Naive thymus-derived CD4-positive, alpha-beta T cell (primary cell): ENCODE measurements at regions of chr19 and their contacts with region 1.

Region 1: DNA sequence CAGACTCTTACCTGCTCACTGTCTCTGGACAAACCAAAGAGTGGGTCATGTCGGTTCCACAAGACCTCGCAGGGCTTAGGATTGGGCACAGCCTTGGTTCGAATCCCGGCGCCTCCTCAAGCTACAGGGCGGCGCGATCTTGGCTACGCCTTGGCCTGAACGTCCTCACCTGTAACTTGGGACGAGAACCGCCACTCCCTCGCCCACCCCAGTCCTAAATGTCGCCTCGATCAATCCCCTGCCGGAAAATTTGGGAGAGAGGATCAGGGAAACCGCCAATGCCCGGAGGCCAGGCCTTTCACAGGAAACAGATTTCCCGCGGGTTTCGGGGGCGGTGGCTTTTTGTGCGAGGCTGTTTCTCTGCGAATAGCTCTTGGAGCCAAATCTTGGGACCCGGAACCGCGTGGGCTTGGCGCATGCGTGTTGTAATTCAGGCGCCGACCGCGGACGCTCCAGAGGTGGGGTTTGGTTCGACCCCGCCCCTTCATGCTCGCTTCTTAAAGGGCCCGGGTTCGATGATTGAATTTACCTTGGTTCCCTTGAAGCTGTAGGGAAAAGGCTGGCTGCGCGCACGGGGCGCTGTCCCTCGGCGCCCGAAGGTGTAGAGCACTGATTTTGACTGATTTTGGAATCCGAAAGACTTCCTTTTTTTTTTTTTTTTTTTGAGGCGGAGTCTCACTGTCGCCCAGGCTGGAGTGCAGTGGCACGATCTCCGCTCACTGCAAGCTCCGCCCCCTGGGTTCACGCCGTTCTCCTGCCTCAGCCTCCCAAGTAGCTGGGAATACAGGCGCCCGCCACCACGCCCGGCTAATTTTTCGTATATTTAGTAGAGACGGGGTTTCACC is at the start of gene NR2C2AP:
- DNase-seq: peak; percentile 80 to 94 (median 89)
- ATAC-seq: peak; percentile 95
- H3K4me3 ChIP-seq: peak within 1 kb of the TSS; percentile 95
- H3K4me3 Mint-ChIP-seq: peak within 1 kb of the TSS; percentile 90 to 94 (median 92)
- H3K27ac ChIP-seq: peak within 1 kb of the TSS; percentile 89
- H3K27ac Mint-ChIP-seq: peak within 1 kb of the TSS; percentile 88 to 96 (median 93)
- H3K4me1 ChIP-seq: peaks cover 23% of the 10 kb centered on the region in 2 donors
- H3K4me1 Mint-ChIP-seq: peaks cover 22 to 36% (median 30%) of the 10 kb centered on the region in 7 donors
- H3K27me3 ChIP-seq: no peaks in the 10 kb centered on the region
- H3K27me3 Mint-ChIP-seq: peaks cover 0 to 12% (median 0%) of the 10 kb centered on the region in 5 donors
- total RNA-seq, gene NR2C2AP: 13.8 to 33.4 (median 28.7) TPM

Region 2: GRCh38 chr19:17539238-17540117 is 1663.8 kb before region 1 on chr19:
- CTCF ChIA-PET with region 1: no interaction called
- POLR2A ChIA-PET with region 1: no interaction called
- intact Hi-C with region 1: loop called in 1 of 2 experiments (anchors 5 kb)
- DNase-seq: peak; percentile 87 to 99 (median 94)
- ATAC-seq: peak; percentile 100
- H3K4me3 ChIP-seq: peak overlapping the region; percentile 68
- H3K4me3 Mint-ChIP-seq: peak overlapping the region; percentile 84 to 90 (median 86)
- H3K27ac ChIP-seq: peak overlapping the region; percentile 67
- H3K27ac Mint-ChIP-seq: peak overlapping the region; percentile 16 to 81 (median 62)
- H3K4me1 ChIP-seq: peaks cover 9 to 10% of the 10 kb centered on the region in 2 donors
- H3K4me1 Mint-ChIP-seq: peaks cover 7 to 23% (median 16%) of the 10 kb centered on the region in 7 donors
- H3K27me3 ChIP-seq: no peaks in the 10 kb centered on the region
- H3K27me3 Mint-ChIP-seq: peaks cover 0 to 34% (median 0%) of the 10 kb centered on the region in 5 donors

Region 3: DNA sequence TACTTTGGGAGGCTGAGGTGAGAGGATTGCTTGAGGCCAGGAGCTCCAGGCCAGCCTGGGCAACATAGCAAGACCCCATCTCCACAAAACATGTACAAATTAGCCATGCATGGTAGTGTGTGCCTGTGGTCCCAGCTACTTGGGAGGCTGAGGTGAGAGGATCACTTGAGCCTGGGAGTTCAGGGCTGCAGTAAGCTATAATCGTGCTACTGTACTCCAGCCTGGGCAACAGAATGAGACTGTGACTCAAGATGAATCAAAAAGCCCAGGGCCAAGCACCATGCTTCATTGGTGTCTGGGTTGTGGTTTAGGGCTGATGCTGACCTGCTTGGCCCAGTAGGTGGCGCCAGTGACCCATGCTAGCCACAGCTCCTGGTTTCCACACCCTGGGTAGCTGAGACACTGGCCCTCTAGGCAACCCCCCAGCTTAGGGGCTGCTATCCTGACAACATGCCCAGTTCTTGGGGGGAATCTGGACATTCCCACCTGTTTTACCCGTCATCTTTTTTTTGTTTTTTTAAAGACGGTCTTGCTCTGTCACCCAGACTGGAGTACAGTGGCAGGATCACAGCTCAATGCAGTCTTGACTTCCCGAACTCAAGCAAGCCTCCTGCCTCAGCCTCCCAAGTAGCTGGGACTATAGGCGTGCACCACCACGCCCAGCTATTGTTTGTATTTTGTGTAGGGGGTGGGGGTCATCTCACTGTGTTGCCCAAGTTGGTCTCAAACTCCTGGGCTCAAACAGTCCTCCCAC is 1265.0 kb before region 1 on chr19:
- CTCF ChIA-PET with region 1: no interaction called
- POLR2A ChIA-PET with region 1: no interaction called
- intact Hi-C with region 1: no loop called
- DNase-seq: peak; percentile 67 to 85 (median 78)
- ATAC-seq: peak; percentile 98
- H3K4me3 ChIP-seq: no peak overlapping the region
- H3K4me3 Mint-ChIP-seq: no peak overlapping the region
- H3K27ac ChIP-seq: no peak overlapping the region
- H3K27ac Mint-ChIP-seq: no peak overlapping the region
- H3K4me1 ChIP-seq: peaks cover 5 to 8% of the 10 kb centered on the region in 2 donors
- H3K4me1 Mint-ChIP-seq: peaks cover 5 to 7% (median 6%) of the 10 kb centered on the region in 7 donors
- H3K27me3 ChIP-seq: no peaks in the 10 kb centered on the region
- H3K27me3 Mint-ChIP-seq: no peaks in the 10 kb centered on the region

Region 4: DNA sequence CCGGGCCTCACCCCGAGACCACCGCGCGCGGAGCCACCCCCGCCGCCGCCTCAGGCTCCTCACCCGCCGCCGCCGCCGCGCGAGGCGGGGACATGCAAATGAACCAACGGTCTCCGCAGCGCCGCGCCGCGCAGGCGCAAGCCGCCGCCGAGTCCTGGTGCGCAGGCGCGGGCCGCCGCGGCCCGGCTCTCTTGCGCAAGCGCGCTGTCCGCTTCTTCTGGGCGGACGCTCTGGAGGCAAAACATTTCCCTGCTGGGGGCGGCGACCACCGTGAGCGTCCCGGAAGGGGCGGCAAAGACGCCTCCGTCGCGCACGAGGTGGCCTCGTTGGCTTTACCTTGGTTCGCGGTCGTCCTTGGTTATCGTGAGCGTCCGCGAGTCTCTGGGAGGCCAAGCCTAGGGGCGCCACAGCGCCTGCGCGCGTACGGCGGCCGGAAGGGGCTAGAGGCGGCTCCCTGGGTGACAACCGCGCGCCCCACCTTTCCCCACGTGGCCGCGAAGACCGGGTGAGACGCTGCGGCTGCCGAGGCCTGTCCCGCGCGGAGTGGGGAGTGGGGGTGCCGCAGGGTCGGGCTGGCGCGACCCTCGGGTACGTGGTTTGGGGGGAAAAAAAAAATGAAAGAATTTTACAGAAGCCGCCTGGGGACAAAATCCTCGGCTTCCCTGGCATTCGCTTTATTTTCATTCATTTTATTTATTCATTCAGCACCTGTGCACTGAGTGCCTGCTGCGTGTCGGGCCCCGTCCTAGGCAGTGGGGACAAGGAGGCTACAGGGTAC is 169.6 kb before region 1 on chr19 and contains the starts of genes ARMC6 and SUGP2:
- CTCF ChIA-PET with region 1: no interaction called
- POLR2A ChIA-PET with region 1: no interaction called
- intact Hi-C with region 1: no loop called
- DNase-seq: peak; percentile 84 to 96 (median 94)
- ATAC-seq: peak; percentile 87
- H3K4me3 ChIP-seq: peak within 1 kb of the TSS; percentile 84
- H3K4me3 Mint-ChIP-seq: peak within 1 kb of the TSS; percentile 88 to 100 (median 96)
- H3K27ac ChIP-seq: peak within 1 kb of the TSS; percentile 86
- H3K27ac Mint-ChIP-seq: peak within 1 kb of the TSS; percentile 86 to 100 (median 94)
- H3K4me1 ChIP-seq: peaks cover 14 to 16% of the 10 kb centered on the region in 2 donors
- H3K4me1 Mint-ChIP-seq: peaks cover 16 to 40% (median 36%) of the 10 kb centered on the region in 7 donors
- H3K27me3 ChIP-seq: no peaks in the 10 kb centered on the region
- H3K27me3 Mint-ChIP-seq: no peaks in the 10 kb centered on the region
- total RNA-seq, gene ARMC6: 14.0 to 32.6 (median 15.0) TPM
- total RNA-seq, gene SUGP2: 116 to 145 (median 129) TPM

Region 5: DNA sequence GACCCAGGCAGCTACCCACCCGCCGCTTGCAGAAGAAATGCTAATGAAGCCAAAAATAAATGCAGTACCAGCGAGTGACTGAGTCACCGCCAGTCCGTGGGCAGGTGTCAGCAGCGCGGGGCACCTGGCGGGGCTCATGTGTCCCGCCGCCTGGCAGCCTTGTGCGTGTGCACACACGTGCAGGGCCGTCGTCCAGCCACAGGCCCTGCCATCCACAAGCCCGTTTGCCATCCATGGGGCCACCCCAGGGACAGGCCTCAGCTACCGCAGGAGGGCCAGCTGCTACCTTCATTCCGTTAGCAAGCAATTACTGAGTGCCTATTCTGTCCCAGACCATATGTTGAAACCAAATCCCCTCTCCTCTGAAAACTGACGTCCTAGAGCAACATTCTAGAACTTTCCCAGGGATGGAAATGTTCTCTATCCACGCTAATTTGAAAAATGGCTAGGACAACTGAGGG is 29.1 kb after region 1 on chr19:
- CTCF ChIA-PET with region 1: no interaction called
- POLR2A ChIA-PET with region 1: no interaction called
- intact Hi-C with region 1: no loop called
- DNase-seq: no peak
- ATAC-seq: no peak
- H3K4me3 ChIP-seq: no peak overlapping the region
- H3K4me3 Mint-ChIP-seq: no peak overlapping the region
- H3K27ac ChIP-seq: no peak overlapping the region
- H3K27ac Mint-ChIP-seq: no peak overlapping the region
- H3K4me1 ChIP-seq: no peaks in the 10 kb centered on the region
- H3K4me1 Mint-ChIP-seq: no peaks in the 10 kb centered on the region
- H3K27me3 ChIP-seq: no peaks in the 10 kb centered on the region
- H3K27me3 Mint-ChIP-seq: peaks cover 3 to 15% (median 7%) of the 10 kb centered on the region in 5 donors